Gastrocnemius medialis (tissue), 4 donors: ENCODE measurements at regions of chr1 and their contacts with region 1.

Region 1: GRCh38 chr1:58968360-58968952 is 184.6 kb upstream of the JUN start:
- DNase-seq: peak; percentile 82 to 93
- ATAC-seq: peak; percentile 53 to 54
- H3K4me3 ChIP-seq: no peak overlapping the region
- H3K27ac ChIP-seq: peak overlapping the region; percentile 90 to 96 (median 93)
- H3K4me1 ChIP-seq: peaks cover 62 to 65% of the 10 kb centered on the region in 2 donors
- H3K27me3 ChIP-seq: no peaks in the 10 kb centered on the region
- CTCF ChIP-seq: peak in 1 of 5 experiments; percentile 11
- POLR2A ChIP-seq: peak; percentile 45 to 63

Region 2: DNA sequence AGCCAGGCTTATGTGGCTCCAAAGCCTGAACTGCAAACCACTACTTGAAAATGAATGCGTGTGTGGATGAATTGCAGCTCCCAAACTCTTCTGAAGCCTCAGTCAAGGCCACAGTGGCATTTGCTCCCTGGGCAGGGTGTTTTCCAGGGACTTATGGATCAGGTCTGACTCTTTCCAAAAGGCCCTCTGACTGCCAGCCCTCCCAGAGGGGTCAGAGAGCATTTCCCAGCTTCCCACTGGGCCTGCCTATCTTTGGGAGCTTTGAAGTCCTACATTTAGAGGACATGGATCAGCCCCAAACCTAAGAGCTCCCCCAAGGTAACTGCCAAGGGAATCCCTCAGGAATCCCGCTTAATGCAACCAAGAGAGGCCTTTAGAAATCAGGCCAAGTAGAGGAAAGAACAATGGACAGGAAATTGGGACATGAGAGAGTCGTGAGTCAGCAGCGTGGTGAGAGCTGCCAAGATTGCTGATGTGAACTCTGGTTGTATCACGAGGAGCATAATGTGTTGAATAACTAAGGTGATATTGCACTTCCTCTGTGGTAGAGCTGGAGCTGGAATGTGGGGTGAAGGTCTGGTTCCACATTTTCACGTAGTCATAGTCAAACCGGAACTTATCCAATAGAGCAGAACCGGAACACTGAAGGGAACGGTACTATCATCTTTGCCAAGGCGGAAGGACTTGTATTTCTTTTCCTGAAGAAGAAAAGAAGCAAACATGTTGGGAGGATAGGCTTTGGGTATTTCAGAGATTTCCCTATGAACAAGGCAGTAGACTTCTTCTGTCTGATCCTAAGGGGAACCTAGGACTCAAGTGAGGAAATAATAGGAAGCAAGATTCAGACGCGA is 85.2 kb before region 1 on chr1:
- in situ Hi-C with region 1: no loop called
- intact Hi-C with region 1: loop called (anchors 5 kb)
- DNase-seq: peak; percentile 74 to 88
- ATAC-seq: peak; percentile 68 to 79
- H3K4me3 ChIP-seq: no peak overlapping the region
- H3K27ac ChIP-seq: peak overlapping the region; percentile 80 to 89 (median 84)
- H3K4me1 ChIP-seq: peaks cover 62 to 67% of the 10 kb centered on the region in 2 donors
- H3K27me3 ChIP-seq: no peaks in the 10 kb centered on the region
- CTCF ChIP-seq: no peak
- POLR2A ChIP-seq: no peak

Region 3: GRCh38 chr1:58903514-58904298 is 64.8 kb before region 1 on chr1:
- in situ Hi-C with region 1: loop called in 2 of 4 experiments (anchors 5 kb)
- intact Hi-C with region 1: loop called (anchors 2 kb)
- DNase-seq: peak; percentile 86 to 93
- ATAC-seq: peak; percentile 69 to 81
- H3K4me3 ChIP-seq: peak overlapping the region; percentile 53 to 82 (median 60)
- H3K27ac ChIP-seq: peak overlapping the region; percentile 94 to 100 (median 94)
- H3K4me1 ChIP-seq: peaks cover 52 to 54% of the 10 kb centered on the region in 2 donors
- H3K27me3 ChIP-seq: no peaks in the 10 kb centered on the region
- CTCF ChIP-seq: no peak
- POLR2A ChIP-seq: peak; percentile 82 to 91

Region 4: DNA sequence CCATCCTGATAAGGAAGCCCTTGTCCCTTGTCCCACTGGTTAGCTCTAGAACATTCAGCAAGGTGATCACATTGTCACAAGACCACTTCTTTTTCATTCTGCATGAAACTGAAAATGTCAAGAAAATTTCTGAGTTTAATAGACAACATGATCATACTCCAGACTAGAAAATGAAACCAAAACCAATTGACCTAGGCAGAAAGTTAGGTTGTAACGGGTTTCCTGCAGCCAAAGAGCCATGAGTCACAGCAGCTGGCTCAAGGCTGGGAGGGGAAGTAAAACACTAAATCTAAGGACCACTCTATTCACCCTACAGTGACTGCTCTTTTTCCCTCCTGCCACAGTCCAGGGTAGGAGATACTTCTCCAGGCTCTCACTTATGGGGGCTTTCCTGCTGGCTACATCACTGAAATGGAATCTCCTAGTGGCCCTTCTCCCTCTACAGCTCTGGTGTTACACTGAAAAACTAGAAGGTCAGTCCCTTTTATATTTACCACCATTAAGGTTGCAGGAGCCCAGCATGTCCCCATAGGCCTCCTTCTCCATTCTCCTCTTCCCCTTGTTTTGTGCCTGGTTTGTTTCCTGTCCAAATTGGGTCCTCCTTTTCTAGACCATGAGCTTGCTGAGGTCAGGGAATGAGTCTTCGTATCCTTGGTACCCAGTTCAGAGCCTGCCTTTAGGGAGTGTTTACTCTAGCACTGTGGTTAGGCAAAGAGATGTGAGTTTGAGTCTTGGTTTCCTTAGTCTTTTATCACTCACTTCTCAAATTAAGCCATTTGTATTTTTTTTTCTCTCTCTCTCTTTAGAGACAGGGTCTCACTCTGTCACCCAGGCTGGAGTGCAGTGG is 51.9 kb after region 1 on chr1:
- in situ Hi-C with region 1: no loop called
- intact Hi-C with region 1: loop called (anchors 2 kb)
- DNase-seq: peak; percentile 31 to 69
- ATAC-seq: peak; percentile 72 to 73
- H3K4me3 ChIP-seq: peak overlapping the region; percentile 35 to 48 (median 36)
- H3K27ac ChIP-seq: peak overlapping the region; percentile 93 to 96 (median 95)
- H3K4me1 ChIP-seq: peaks cover 25 to 33% of the 10 kb centered on the region in 2 donors
- H3K27me3 ChIP-seq: no peaks in the 10 kb centered on the region
- CTCF ChIP-seq: no peak
- POLR2A ChIP-seq: no peak

Region 5: GRCh38 chr1:59057211-59057694 is 88.8 kb after region 1 on chr1:
- in situ Hi-C with region 1: no loop called
- intact Hi-C with region 1: no loop called
- DNase-seq: peak; percentile 56 to 72
- ATAC-seq: peak; percentile 80 to 82
- H3K4me3 ChIP-seq: no peak overlapping the region
- H3K27ac ChIP-seq: peak overlapping the region; percentile 43 to 66 (median 58)
- H3K4me1 ChIP-seq: peaks cover 26 to 47% of the 10 kb centered on the region in 2 donors
- H3K27me3 ChIP-seq: no peaks in the 10 kb centered on the region
- CTCF ChIP-seq: no peak
- POLR2A ChIP-seq: no peak

Region 6: DNA sequence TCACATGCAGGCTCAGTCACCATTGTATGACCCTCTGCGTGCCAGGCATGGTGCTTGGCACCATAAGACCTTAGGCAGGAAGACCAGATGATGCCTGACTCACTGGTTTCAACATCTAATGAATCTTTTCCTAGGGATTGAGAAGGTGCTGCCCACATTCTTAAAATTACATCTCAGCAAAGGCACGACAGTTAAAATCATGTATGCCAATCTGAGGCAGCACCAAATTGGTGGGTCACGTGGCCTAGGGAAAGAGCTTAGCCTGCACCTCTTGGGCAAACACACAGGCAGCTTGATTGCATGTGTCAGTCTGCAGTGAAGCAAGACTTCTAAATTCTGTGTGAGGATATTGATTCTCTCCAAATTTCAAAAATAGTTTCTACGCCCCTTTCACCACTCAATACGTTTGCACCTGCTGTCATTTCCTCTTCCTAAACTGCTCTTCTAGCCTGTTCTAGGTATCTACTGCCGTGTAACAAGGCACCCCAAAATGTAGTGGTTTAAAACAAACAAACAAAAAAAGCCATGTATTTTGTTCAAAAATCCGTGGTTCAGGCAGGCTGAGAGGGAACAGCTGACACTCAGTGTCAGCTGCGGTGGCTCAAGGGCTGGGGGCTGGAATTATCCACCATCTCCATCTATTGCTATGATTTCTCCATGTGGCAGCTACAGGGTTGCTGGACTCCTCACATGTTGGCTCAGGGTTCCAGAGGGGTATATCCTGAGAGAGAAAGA is 168.3 kb after region 1 on chr1:
- in situ Hi-C with region 1: loop called in 1 of 4 experiments (anchors 5 kb)
- intact Hi-C with region 1: loop called (anchors 2 kb)
- DNase-seq: peak; percentile 64 to 82
- ATAC-seq: peak; percentile 62 to 74
- H3K4me3 ChIP-seq: no peak overlapping the region
- H3K27ac ChIP-seq: peak overlapping the region; percentile 85 to 91 (median 88)
- H3K4me1 ChIP-seq: peaks cover 32 to 42% of the 10 kb centered on the region in 2 donors
- H3K27me3 ChIP-seq: no peaks in the 10 kb centered on the region
- CTCF ChIP-seq: no peak
- POLR2A ChIP-seq: no peak

Region 7: DNA sequence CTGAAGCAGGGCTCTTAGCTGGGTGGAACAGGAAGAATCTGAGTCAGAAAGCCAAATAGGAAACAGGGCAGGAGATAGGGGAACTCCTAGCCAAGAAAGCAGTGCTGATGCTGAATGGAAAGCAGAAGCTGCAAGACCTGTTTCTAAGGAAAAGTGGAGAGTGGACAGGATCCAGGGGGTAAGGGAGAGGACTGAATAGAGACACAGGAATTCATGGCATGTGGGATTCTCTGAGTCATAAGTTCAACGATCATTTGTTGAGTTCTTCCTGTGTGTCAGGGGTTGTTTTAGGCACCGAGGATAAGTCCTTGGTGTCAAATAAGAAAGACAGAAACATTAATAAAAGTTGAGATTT is 174.7 kb after region 1 on chr1:
- in situ Hi-C with region 1: loop called in 1 of 4 experiments (anchors 5 kb)
- intact Hi-C with region 1: no loop called
- DNase-seq: no peak
- ATAC-seq: peak in 1 of 2 donors; percentile 23
- H3K4me3 ChIP-seq: no peak overlapping the region
- H3K27ac ChIP-seq: peak overlapping the region; percentile 65 to 91 (median 78)
- H3K4me1 ChIP-seq: peaks cover 27 to 45% of the 10 kb centered on the region in 2 donors
- H3K27me3 ChIP-seq: no peaks in the 10 kb centered on the region
- CTCF ChIP-seq: no peak
- POLR2A ChIP-seq: no peak

Region 8: GRCh38 chr1:59682396-59683080 is 714.1 kb after region 1 on chr1:
- in situ Hi-C with region 1: no loop called
- intact Hi-C with region 1: loop called (anchors 5 kb)
- DNase-seq: peak; percentile 62 to 76
- ATAC-seq: peak; percentile 65 to 73
- H3K4me3 ChIP-seq: no peak overlapping the region
- H3K27ac ChIP-seq: peak overlapping the region; percentile 85 to 89 (median 87)
- H3K4me1 ChIP-seq: peaks cover 57 to 77% of the 10 kb centered on the region in 2 donors
- H3K27me3 ChIP-seq: no peaks in the 10 kb centered on the region
- CTCF ChIP-seq: no peak
- POLR2A ChIP-seq: peak in 1 of 2 donors; percentile 60